ENCODE measurements at regions of chr9 and their contacts with region 1.

Region 1: DNA sequence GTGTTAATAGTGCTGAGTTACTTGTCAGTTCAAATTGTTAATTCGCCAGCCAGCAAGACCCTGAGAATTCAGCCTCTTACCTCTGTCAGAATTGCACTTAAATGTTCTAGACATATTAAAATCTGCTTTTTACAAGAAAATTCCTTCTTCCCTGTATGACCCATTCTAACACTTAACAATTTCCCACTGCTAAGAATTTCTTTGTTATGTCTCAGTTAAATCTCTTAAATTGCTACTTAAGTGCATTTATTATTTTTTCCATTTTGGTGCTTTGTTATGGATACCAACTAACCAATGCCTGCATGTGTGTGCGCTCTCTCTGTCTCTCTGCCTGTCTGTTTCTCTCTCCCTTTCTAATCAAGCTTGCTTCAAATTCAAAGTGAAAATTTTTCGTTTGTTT is 44.9 kb downstream of the IZUMO3 start:
- DNase-seq: no peak
- ATAC-seq: no peak
- H3K4me3 ChIP-seq: no peak overlapping the region
- H3K27ac ChIP-seq: no peak overlapping the region
- H3K4me1 ChIP-seq: no peaks in the 10 kb centered on the region
- H3K27me3 ChIP-seq: no peaks in the 10 kb centered on the region
- CTCF ChIP-seq: no peak

Region 2: DNA sequence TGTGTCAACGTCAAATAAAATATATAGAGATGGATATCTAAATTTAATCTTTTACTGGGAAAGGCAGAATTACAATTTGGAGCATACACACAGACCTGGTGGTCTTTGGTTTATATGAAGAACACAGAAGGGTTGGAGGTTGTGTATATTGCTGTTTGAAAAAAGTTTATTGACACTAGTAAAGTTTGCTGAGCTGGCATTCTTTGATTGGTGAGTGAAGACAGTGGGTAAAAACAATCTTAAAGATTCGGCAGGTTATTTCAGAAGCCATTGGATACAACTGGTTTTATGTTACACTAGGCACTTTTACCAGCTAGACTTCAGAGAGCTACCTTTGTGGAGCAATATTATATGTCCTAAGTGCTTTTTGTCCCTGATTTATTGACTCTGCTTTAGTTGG is 17.8 kb after region 1 on chr9:
- intact Hi-C with region 1: loop called in 1 of 10 experiments (anchors 2 kb)
- DNase-seq: no peak
- ATAC-seq: no peak
- H3K4me3 ChIP-seq: no peak overlapping the region
- H3K27ac ChIP-seq: no peak overlapping the region
- H3K4me1 ChIP-seq: no peaks in the 10 kb centered on the region
- H3K27me3 ChIP-seq: no peaks in the 10 kb centered on the region
- CTCF ChIP-seq: no peak